Mammary epithelial cell (primary cell): ENCODE measurements at regions of chr11 and their contacts with region 1.

Region 1: GRCh38 chr11:102109896-102110760 is at the start of gene YAP1:
- DNase-seq: peak; percentile 95
- H3K4me3 ChIP-seq: peak within 1 kb of the TSS; percentile 61 to 82 (median 80)
- H3K27ac ChIP-seq: peak within 1 kb of the TSS; percentile 97
- H3K4me1 ChIP-seq: peaks cover 17% of the 10 kb centered on the region
- H3K27me3 ChIP-seq: no peaks in the 10 kb centered on the region
- CTCF ChIP-seq: no peak
- total RNA-seq, gene YAP1: 163 to 234 TPM

Region 2: GRCh38 chr11:101914738-101915426 is 195.2 kb before region 1 on chr11 and contains the start of gene CEP126:
- CTCF ChIA-PET with region 1: no interaction called
- dilution Hi-C with region 1: no loop called
- in situ Hi-C with region 1: no loop called
- intact Hi-C with region 1: loop called (anchors 1 kb)
- DNase-seq: peak; percentile 92
- H3K4me3 ChIP-seq: peak within 1 kb of the TSS; percentile 75 to 84 (median 82)
- H3K27ac ChIP-seq: peak within 1 kb of the TSS; percentile 93
- H3K4me1 ChIP-seq: peaks cover 12% of the 10 kb centered on the region
- H3K27me3 ChIP-seq: no peaks in the 10 kb centered on the region
- CTCF ChIP-seq: peak; percentile 20 to 59
- total RNA-seq, gene CEP126: 2.2 to 2.8 TPM

Region 3: GRCh38 chr11:102061276-102061675 is 48.9 kb before region 1 on chr11:
- CTCF ChIA-PET with region 1: interaction called, 4 read pairs
- dilution Hi-C with region 1: loop called (anchors 5 kb)
- in situ Hi-C with region 1: no loop called
- intact Hi-C with region 1: loop called (anchors 5 kb)
- DNase-seq: no peak
- H3K4me3 ChIP-seq: no peak overlapping the region
- H3K27ac ChIP-seq: no peak overlapping the region
- H3K4me1 ChIP-seq: peaks cover 18% of the 10 kb centered on the region
- H3K27me3 ChIP-seq: no peaks in the 10 kb centered on the region
- CTCF ChIP-seq: peak; percentile 25 to 63

Region 4: DNA sequence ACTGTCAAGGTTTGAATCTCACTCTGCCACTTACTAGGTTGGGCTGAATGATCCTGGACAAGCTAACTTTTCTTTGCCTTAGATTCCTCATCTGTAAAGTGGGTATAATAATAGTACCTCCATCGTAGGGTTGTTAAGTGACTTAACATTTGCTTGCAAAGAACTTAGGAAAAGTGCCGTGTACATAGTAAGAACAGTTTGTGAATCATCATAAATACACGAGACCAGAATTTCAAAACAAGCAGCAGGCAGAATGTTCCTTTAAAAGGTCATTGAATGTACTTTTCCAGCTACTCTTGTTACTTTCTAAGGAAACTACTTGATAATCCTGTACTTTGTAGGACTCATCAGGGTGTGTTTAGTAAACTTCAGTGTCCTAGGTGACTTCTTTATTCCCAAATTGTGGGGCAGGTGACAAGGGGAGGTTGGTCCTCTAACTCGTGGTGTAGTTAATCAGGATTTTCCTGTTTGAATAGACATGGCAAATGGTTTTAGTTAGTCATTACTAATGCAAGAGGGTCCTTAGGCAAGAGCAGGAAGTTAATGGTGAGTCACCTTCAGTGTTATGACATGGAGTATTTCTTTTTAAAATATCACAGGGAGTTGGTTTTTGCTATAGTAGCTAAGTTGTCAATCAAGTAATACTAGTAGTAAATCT is 68.0 kb after region 1 on chr11:
- CTCF ChIA-PET with region 1: no interaction called
- dilution Hi-C with region 1: loop called (anchors 5 kb)
- in situ Hi-C with region 1: no loop called
- intact Hi-C with region 1: loop called (anchors 1 kb)
- DNase-seq: peak; percentile 96
- H3K4me3 ChIP-seq: no peak overlapping the region
- H3K27ac ChIP-seq: peak overlapping the region; percentile 66
- H3K4me1 ChIP-seq: peaks cover 28% of the 10 kb centered on the region
- H3K27me3 ChIP-seq: no peaks in the 10 kb centered on the region
- CTCF ChIP-seq: no peak

Region 5: DNA sequence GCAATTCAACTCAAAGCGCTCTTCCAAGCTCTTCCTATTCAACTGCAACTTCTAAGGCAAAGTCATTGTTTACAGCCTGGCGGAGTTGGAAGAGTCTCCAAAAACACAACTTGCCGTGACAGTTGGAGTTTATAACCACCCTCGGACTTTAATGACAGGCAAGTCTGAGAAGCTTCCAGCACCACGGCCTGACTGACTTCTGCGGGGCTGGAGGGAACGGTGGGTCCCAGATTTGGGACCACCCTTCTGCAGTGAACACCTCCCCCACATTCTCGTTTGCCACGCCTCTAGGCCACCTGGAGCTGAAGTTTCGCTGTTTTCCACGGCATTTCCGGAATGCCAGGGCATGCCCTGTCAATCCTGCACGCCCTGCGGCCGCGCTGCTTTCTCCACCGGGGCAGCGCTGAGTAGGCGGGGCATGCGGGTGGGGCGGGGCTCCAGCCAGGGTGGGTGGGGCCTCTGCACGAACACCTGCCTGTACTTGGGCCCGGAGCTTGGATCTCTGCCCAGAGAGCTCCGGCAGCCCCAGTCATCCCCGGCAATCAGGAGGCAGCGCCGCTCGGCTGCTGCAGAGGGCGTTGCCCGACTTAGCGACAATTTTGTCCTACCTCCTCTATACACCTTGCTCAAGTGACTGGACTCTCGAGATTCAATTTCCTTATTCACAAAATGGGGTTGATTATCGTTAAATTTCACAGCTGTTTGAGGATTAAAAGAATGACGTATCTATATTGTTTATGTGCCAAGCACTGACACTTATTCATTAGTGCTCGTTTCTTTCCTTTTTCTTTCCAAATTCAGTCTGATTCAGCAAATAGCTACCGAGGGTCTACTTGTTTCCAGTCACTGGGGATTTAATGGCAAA is 158.4 kb after region 1 on chr11:
- CTCF ChIA-PET with region 1: interaction called, 16 read pairs
- dilution Hi-C with region 1: no loop called
- in situ Hi-C with region 1: no loop called
- intact Hi-C with region 1: loop called (anchors 1 kb)
- DNase-seq: peak; percentile 95
- H3K4me3 ChIP-seq: peak overlapping the region; percentile 32 to 56 (median 51)
- H3K27ac ChIP-seq: peak overlapping the region; percentile 90
- H3K4me1 ChIP-seq: peaks cover 36% of the 10 kb centered on the region
- H3K27me3 ChIP-seq: no peaks in the 10 kb centered on the region
- CTCF ChIP-seq: peak; percentile 66 to 78